ENCODE measurements at regions of chr11 and their contacts with region 1.

Region 1: GRCh38 chr11:16902781-16903378 is 111.3 kb downstream of the PLEKHA7 start:
- DNase-seq: peak; percentile 39
- ATAC-seq: peak; percentile 85
- H3K4me3 Mint-ChIP-seq: peak overlapping the region; percentile 46
- H3K27ac Mint-ChIP-seq: peak overlapping the region; percentile 98
- H3K4me1 Mint-ChIP-seq: peaks cover 55% of the 10 kb centered on the region
- H3K27me3 Mint-ChIP-seq: no peaks in the 10 kb centered on the region

Region 2: GRCh38 chr11:16738193-16738946 is 164.5 kb before region 1 on chr11 and contains the start of gene C11orf58:
- CTCF ChIA-PET with region 1: no interaction called
- POLR2A ChIA-PET with region 1: no interaction called
- intact Hi-C with region 1: loop called in 1 of 2 experiments (anchors 5 kb)
- DNase-seq: peak; percentile 96
- ATAC-seq: peak; percentile 97
- H3K4me3 Mint-ChIP-seq: no peak within 1 kb of the TSS
- H3K27ac Mint-ChIP-seq: peak within 1 kb of the TSS; percentile 92
- H3K4me1 Mint-ChIP-seq: peaks cover 23% of the 10 kb centered on the region
- H3K27me3 Mint-ChIP-seq: no peaks in the 10 kb centered on the region
- total RNA-seq, gene C11orf58: 142 to 193 TPM

Region 3: GRCh38 chr11:16825968-16826367 is 76.9 kb before region 1 on chr11:
- CTCF ChIA-PET with region 1: no interaction called
- POLR2A ChIA-PET with region 1: no interaction called
- intact Hi-C with region 1: loop called in 1 of 2 experiments (anchors 2 kb)
- DNase-seq: no peak
- ATAC-seq: no peak
- H3K4me3 Mint-ChIP-seq: no peak overlapping the region
- H3K27ac Mint-ChIP-seq: no peak overlapping the region
- H3K4me1 Mint-ChIP-seq: peaks cover 10% of the 10 kb centered on the region
- H3K27me3 Mint-ChIP-seq: no peaks in the 10 kb centered on the region

Region 4: DNA sequence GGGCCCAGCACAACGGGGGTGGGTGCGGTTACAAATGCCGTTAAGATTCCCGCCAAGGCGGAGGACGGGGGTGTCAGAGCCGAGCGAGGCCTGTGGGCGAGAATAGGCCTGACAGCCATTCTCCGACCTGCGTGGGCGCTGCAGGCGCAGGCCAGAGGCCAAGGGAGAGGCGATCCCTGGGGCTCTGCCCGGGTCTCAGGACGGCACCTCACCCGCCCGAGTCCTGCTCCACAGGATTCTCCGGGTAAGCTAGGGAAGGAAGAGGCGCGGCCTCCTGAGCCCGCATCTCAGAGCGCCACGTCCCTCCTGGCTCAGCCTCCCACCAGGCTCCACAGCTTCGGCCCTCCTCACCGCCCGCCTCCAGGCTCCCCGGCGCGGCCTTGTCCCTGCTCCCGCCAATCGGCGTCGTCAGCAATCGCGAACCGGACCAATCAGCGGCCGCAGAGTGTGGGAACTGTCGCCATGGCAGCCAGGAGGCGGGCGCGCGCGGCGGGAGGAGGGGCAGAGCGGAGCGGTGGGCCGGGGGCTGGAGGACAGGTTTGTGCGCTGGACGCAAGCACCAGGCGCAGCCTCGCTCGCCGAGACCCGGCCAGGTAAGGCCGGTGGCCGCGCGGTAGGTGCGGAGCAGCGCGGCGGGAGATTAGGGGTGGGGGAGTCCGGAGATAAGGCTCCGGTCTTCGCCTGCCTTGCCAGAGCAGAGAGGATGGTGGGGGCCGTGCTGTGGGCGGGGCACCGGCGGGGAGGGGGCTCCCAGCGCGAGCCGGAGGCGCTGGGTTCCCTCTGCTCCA is 373.6 kb after region 1 on chr11 and contains the start of gene NUCB2:
- CTCF ChIA-PET with region 1: no interaction called
- POLR2A ChIA-PET with region 1: no interaction called
- intact Hi-C with region 1: loop called (anchors 2 to 5 kb)
- DNase-seq: peak; percentile 99
- ATAC-seq: peak; percentile 92
- H3K4me3 Mint-ChIP-seq: peak within 1 kb of the TSS; percentile 75
- H3K27ac Mint-ChIP-seq: peak within 1 kb of the TSS; percentile 96
- H3K4me1 Mint-ChIP-seq: peaks cover 36% of the 10 kb centered on the region
- H3K27me3 Mint-ChIP-seq: no peaks in the 10 kb centered on the region
- total RNA-seq, gene NUCB2: 45.0 to 59.9 TPM

Region 5: DNA sequence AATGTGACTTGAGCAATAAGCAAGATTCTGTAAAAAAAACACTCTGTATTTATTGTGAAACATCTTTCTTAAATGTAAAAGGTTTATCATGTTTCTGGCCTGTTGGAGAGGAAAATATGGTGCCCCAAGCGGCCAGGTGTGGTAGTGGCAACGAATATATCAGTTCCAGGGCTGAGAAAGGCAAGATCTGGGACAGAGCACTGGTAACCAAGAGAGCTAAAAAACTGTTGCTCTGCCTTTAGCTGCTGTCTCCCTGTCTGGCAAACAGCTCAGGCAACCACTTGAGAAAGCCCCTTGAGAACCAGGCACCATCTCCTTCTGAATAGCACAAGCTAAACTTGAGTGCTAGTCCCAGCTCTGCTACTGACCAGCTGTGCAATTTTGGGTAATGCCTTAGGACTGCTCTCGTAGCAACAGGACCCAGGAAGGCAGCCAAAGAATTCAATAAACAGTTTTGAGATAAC is 961.6 kb after region 1 on chr11:
- CTCF ChIA-PET with region 1: no interaction called
- POLR2A ChIA-PET with region 1: no interaction called
- intact Hi-C with region 1: no loop called
- DNase-seq: peak; percentile 30
- ATAC-seq: no peak
- H3K4me3 Mint-ChIP-seq: no peak overlapping the region
- H3K27ac Mint-ChIP-seq: no peak overlapping the region
- H3K4me1 Mint-ChIP-seq: no peaks in the 10 kb centered on the region
- H3K27me3 Mint-ChIP-seq: no peaks in the 10 kb centered on the region